CD4-positive, alpha-beta T cell (primary cell): ENCODE measurements at regions of chr5 and their contacts with region 1.

Region 1: DNA sequence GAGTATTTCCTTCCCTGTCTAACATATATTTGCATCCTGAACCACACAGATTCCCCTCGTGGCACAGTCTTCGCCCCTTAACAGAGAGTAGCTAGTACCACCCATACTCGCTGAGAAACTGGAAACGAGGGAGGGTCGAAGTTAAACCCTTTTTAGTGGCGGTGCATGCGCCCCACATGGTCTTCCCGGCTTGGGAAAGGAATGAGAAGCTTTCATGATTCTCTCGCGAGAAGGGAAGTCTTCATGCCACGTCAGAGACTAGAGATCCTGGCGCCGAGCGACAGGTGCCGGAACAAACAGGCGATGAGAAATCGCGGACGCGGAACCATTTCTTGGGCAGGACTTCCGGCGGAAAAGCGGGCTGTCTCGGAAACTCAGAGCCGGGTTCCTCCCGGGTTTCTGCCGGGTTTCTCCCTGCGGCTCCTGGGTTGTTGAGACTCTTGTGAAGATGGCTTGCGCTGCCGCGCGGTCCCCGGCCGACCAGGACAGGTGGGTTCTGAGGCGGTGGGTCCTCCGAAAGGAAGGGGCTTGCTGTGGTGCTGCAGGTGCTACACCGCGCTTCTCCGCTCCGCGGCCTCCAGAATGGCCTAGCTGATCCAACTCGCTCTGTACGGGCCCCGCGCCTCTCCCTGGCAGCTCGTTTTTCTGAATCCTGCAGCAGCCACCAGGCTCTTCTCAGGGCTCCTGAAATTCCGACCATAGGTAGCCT is at the start of gene SRP19:
- DNase-seq: peak; percentile 82 to 97 (median 86)
- ATAC-seq: peak; percentile 93
- H3K4me3 ChIP-seq: peak within 1 kb of the TSS; percentile 94
- H3K4me3 Mint-ChIP-seq: peak within 1 kb of the TSS; percentile 92
- H3K27ac ChIP-seq: peak within 1 kb of the TSS; percentile 65 to 88
- H3K27ac Mint-ChIP-seq: peak within 1 kb of the TSS; percentile 93
- H3K4me1 ChIP-seq: peaks cover 24% of the 10 kb centered on the region
- H3K4me1 Mint-ChIP-seq: peaks cover 36% of the 10 kb centered on the region
- H3K27me3 ChIP-seq: no peaks in the 10 kb centered on the region
- H3K27me3 Mint-ChIP-seq: peaks cover 12% of the 10 kb centered on the region
- CTCF ChIP-seq: no peak
- total RNA-seq, gene SRP19: 40.2 to 40.8 TPM

Region 2: DNA sequence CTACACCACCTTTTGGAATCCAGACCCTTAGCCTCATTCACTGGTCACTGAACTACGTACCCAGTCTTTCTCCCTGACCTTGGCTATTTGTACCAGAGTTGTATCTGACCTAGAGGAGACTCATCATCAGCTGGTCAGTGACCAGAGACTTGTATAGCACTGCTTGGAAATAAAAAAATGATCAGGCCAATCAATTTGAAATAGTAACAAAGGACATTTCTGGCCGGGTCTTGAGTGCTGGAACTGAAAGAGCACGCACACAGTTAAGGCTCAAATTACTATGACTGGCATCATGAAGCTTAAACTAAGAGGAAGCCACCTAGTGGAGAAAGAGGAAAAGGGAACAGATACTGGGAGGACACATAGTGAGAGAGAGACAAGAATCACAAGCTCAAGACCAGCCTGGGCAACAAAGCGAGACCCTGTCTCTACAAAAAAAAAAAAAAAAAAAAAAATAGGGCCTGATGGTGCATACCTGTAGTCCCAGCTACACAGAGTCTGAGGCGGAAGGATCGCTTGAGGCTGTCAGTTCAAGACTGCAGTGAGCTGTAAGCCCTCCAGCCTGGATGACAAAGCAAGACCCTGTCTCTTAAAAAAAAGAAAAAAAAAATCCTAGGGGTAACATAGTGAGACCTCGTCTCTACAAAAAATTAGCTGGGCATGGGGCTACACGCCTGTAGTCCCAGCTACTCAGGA is 12.8 kb before region 1 on chr5:
- CTCF ChIA-PET with region 1: interaction called, 14 read pairs
- POLR2A ChIA-PET with region 1: interaction called, 8 read pairs
- intact Hi-C with region 1: no loop called
- DNase-seq: peak in 4 of 14 experiments; percentile 17 to 71 (median 62)
- ATAC-seq: peak; percentile 99
- H3K4me3 ChIP-seq: no peak overlapping the region
- H3K4me3 Mint-ChIP-seq: no peak overlapping the region
- H3K27ac ChIP-seq: no peak overlapping the region
- H3K27ac Mint-ChIP-seq: no peak overlapping the region
- H3K4me1 ChIP-seq: peaks cover 4% of the 10 kb centered on the region
- H3K4me1 Mint-ChIP-seq: peaks cover 4% of the 10 kb centered on the region
- H3K27me3 ChIP-seq: no peaks in the 10 kb centered on the region
- H3K27me3 Mint-ChIP-seq: peaks cover 11% of the 10 kb centered on the region
- CTCF ChIP-seq: peak; percentile 83

Region 3: GRCh38 chr5:112878760-112879159 is 17.7 kb after region 1 on chr5:
- CTCF ChIA-PET with region 1: interaction called, 8 read pairs
- POLR2A ChIA-PET with region 1: interaction called, 12 read pairs
- intact Hi-C with region 1: no loop called
- DNase-seq: peak in 12 of 14 experiments; percentile 10 to 74 (median 45)
- ATAC-seq: peak; percentile 94
- H3K4me3 ChIP-seq: no peak overlapping the region
- H3K4me3 Mint-ChIP-seq: peak overlapping the region; percentile 0
- H3K27ac ChIP-seq: peak overlapping the region in 1 of 2 donors; percentile 39
- H3K27ac Mint-ChIP-seq: peak overlapping the region; percentile 77
- H3K4me1 ChIP-seq: peaks cover 25% of the 10 kb centered on the region
- H3K4me1 Mint-ChIP-seq: peaks cover 29% of the 10 kb centered on the region
- H3K27me3 ChIP-seq: no peaks in the 10 kb centered on the region
- H3K27me3 Mint-ChIP-seq: no peaks in the 10 kb centered on the region
- CTCF ChIP-seq: no peak

Region 4: GRCh38 chr5:112968411-112969106 is 107.5 kb after region 1 on chr5:
- CTCF ChIA-PET with region 1: no interaction called
- POLR2A ChIA-PET with region 1: interaction called, 3 read pairs
- intact Hi-C with region 1: loop called in 1 of 2 experiments (anchors 10 kb)
- DNase-seq: no peak
- ATAC-seq: no peak
- H3K4me3 ChIP-seq: no peak overlapping the region
- H3K4me3 Mint-ChIP-seq: no peak overlapping the region
- H3K27ac ChIP-seq: no peak overlapping the region
- H3K27ac Mint-ChIP-seq: peak overlapping the region; percentile 1
- H3K4me1 ChIP-seq: no peaks in the 10 kb centered on the region
- H3K4me1 Mint-ChIP-seq: peaks cover 7% of the 10 kb centered on the region
- H3K27me3 ChIP-seq: no peaks in the 10 kb centered on the region
- H3K27me3 Mint-ChIP-seq: no peaks in the 10 kb centered on the region
- CTCF ChIP-seq: no peak

Region 5: GRCh38 chr5:112986224-112986623 is 125.1 kb after region 1 on chr5:
- CTCF ChIA-PET with region 1: no interaction called
- POLR2A ChIA-PET with region 1: no interaction called
- intact Hi-C with region 1: no loop called
- DNase-seq: no peak
- ATAC-seq: no peak
- H3K4me3 ChIP-seq: no peak overlapping the region
- H3K4me3 Mint-ChIP-seq: no peak overlapping the region
- H3K27ac ChIP-seq: no peak overlapping the region
- H3K27ac Mint-ChIP-seq: no peak overlapping the region
- H3K4me1 ChIP-seq: peaks cover 9% of the 10 kb centered on the region
- H3K4me1 Mint-ChIP-seq: peaks cover 70% of the 10 kb centered on the region
- H3K27me3 ChIP-seq: no peaks in the 10 kb centered on the region
- H3K27me3 Mint-ChIP-seq: no peaks in the 10 kb centered on the region
- CTCF ChIP-seq: no peak